Right ventricle myocardium superior (tissue), 1 donor: ENCODE measurements at regions of chr1 and their contacts with region 1.

Region 1: GRCh38 chr1:24111996-24112779 is at the start of gene MYOM3:
- DNase-seq: peak; percentile 86
- ATAC-seq: peak; percentile 78
- total RNA-seq, gene MYOM3: 396 TPM

Region 2: GRCh38 chr1:24070821-24071393 is 41.3 kb before region 1 on chr1:
- intact Hi-C with region 1: loop called (anchors 5 kb)
- DNase-seq: peak; percentile 74
- ATAC-seq: peak; percentile 75